Caco-2 (cell line): ENCODE measurements at regions of chr10 and their contacts with region 1.

Region 1: GRCh38 chr10:125442856-125443540 is 240.0 kb downstream of the TEX36 start:
- DNase-seq: no peak
- H3K4me3 ChIP-seq: no peak overlapping the region
- H3K4me3 Mint-ChIP-seq: no peak overlapping the region
- H3K27ac Mint-ChIP-seq: no peak overlapping the region
- H3K4me1 ChIP-seq: no peaks in the 10 kb centered on the region
- H3K4me1 Mint-ChIP-seq: no peaks in the 10 kb centered on the region
- H3K27me3 ChIP-seq: no peaks in the 10 kb centered on the region
- H3K27me3 Mint-ChIP-seq: peaks cover 18% of the 10 kb centered on the region
- CTCF ChIP-seq: no peak

Region 2: GRCh38 chr10:125411724-125412123 is 31.3 kb before region 1 on chr10:
- CTCF ChIA-PET with region 1: no interaction called
- POLR2A ChIA-PET with region 1: no interaction called
- intact Hi-C with region 1: loop called (anchors 1 kb)
- DNase-seq: no peak
- H3K4me3 ChIP-seq: no peak overlapping the region
- H3K4me3 Mint-ChIP-seq: no peak overlapping the region
- H3K27ac Mint-ChIP-seq: no peak overlapping the region
- H3K4me1 ChIP-seq: no peaks in the 10 kb centered on the region
- H3K4me1 Mint-ChIP-seq: peaks cover 8% of the 10 kb centered on the region
- H3K27me3 ChIP-seq: no peaks in the 10 kb centered on the region
- H3K27me3 Mint-ChIP-seq: peaks cover 2% of the 10 kb centered on the region
- CTCF ChIP-seq: no peak